Right lobe of liver (tissue), 6 donors: ENCODE measurements at regions of chr2 and their contacts with region 1.

Region 1: DNA sequence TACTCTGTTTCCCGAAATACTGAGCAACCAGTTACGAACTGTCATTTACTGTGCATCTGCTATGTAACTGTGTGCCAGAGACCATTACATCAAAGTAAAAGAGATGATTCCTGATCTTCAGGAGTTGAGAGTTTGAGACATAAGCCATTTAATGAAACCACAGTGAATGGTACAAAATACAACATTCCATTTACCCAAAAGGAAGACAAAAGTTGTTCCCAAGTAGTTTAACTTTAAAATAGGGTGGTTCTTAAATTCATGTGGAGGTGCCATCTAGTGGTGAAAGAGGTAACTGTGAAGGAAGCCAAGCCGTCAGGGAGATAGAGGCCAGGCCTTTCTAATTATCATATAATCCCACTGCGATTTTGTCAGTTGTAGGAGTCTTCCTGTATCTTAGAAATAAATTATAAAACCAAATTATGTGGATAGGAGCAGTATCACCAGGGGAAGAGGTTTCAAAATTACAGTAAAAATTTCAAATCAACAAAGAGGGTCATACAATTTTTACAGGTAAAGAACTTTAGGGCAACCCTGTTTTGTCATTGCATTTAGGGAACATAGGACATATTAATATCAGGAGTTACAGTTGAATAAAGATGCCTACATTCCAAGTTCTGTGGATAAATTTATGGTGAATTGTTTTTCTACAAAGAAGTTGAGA is 67.7 kb downstream of the EPAS1 start:
- DNase-seq: no peak
- ATAC-seq: peak; percentile 54 to 72 (median 60)
- H3K4me3 ChIP-seq: no peak overlapping the region
- H3K27ac ChIP-seq: peak overlapping the region in 2 of 3 donors; percentile 18 to 24
- H3K4me1 ChIP-seq: peaks cover 0 to 24% (median 12%) of the 10 kb centered on the region in 4 donors
- H3K27me3 ChIP-seq: no peaks in the 10 kb centered on the region
- CTCF ChIP-seq: peak; percentile 81 to 88 (median 86)
- POLR2A ChIP-seq: no peak

Region 2: GRCh38 chr2:45759310-45759851 is 605.5 kb before region 1 on chr2:
- intact Hi-C with region 1: no loop called
- DNase-seq: no peak
- ATAC-seq: no peak
- H3K4me3 ChIP-seq: no peak overlapping the region
- H3K27ac ChIP-seq: no peak overlapping the region
- H3K4me1 ChIP-seq: no peaks in the 10 kb centered on the region
- H3K27me3 ChIP-seq: no peaks in the 10 kb centered on the region
- CTCF ChIP-seq: no peak
- POLR2A ChIP-seq: no peak

Region 3: GRCh38 chr2:46010925-46011490 is 353.9 kb before region 1 on chr2:
- intact Hi-C with region 1: loop called in 1 of 2 experiments (anchors 10 kb)
- DNase-seq: no peak
- ATAC-seq: peak; percentile 69 to 83 (median 74)
- H3K4me3 ChIP-seq: no peak overlapping the region
- H3K27ac ChIP-seq: no peak overlapping the region
- H3K4me1 ChIP-seq: peaks cover 0 to 29% (median 12%) of the 10 kb centered on the region in 4 donors
- H3K27me3 ChIP-seq: no peaks in the 10 kb centered on the region
- CTCF ChIP-seq: peak; percentile 62 to 76 (median 68)
- POLR2A ChIP-seq: no peak

Region 4: GRCh38 chr2:46200220-46200621 is 164.7 kb before region 1 on chr2:
- intact Hi-C with region 1: no loop called
- DNase-seq: no peak
- ATAC-seq: peak in 3 of 4 donors; percentile 27 to 51 (median 33)
- H3K4me3 ChIP-seq: no peak overlapping the region
- H3K27ac ChIP-seq: no peak overlapping the region
- H3K4me1 ChIP-seq: no peaks in the 10 kb centered on the region
- H3K27me3 ChIP-seq: no peaks in the 10 kb centered on the region
- CTCF ChIP-seq: no peak
- POLR2A ChIP-seq: no peak